ENCODE measurements at regions of chr7 and their contacts with region 1.

Region 1: GRCh38 chr7:1529383-1530116 is 952 bp upstream of the MAFK start:
- DNase-seq: no peak
- ATAC-seq: no peak
- H3K4me3 Mint-ChIP-seq: peak overlapping the region; percentile 59
- H3K27ac Mint-ChIP-seq: no peak overlapping the region
- H3K4me1 Mint-ChIP-seq: peaks cover 31% of the 10 kb centered on the region
- H3K27me3 Mint-ChIP-seq: no peaks in the 10 kb centered on the region
- CTCF ChIP-seq: no peak

Region 2: DNA sequence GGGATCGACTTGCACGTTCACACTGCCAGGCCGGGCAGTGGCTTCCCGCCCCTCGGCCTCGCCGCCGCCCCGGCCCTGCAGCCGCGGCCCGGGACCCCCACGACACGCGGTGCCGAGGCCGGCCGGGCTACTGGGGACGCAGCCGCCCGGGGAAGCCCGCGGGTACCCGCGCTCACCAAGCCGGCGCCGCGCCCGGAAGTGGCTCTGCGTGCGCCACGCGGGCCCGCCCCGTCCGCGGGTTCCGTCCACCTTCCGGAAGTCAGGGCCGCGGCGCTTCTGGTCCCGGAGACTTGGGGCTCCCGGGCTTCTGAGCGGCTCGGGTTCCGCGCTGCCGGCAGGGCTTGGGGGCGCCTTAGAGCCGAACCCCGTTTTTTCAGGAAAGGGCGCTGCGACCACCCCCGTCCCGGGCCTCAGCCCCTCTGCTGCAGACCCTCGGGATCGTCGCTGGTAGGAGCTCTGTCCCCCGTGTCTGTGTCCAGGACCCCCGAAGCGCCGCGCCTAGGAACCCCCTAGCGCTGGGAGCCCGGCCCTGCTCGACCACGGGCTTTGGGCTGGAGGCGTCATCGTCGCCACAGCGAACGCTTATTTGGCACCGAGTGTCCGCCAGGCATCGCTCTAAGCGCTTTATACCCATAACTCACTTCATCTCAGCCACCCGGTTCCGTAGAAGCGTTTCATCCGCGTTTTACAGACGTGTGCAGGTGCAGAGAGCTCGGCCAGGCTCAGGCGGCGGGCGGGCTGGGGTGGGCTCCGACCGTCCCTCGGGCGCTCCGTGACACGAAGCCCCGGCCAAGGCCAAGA is 40.5 kb after region 1 on chr7 and contains the start of gene PSMG3:
- CTCF ChIA-PET with region 1: no interaction called
- POLR2A ChIA-PET with region 1: interaction called, 11 read pairs
- DNase-seq: peak; percentile 82
- ATAC-seq: peak; percentile 73
- H3K4me3 Mint-ChIP-seq: peak within 1 kb of the TSS; percentile 81
- H3K27ac Mint-ChIP-seq: peak within 1 kb of the TSS; percentile 81; the same call in 1 of the 2 replicates
- H3K4me1 Mint-ChIP-seq: peaks cover 23% of the 10 kb centered on the region
- H3K27me3 Mint-ChIP-seq: no peaks in the 10 kb centered on the region
- CTCF ChIP-seq: no peak
- total RNA-seq, gene PSMG3: 33.3 to 50.7 TPM (median 45.9 TPM) in 3 replicates